T-cell (primary cell): ENCODE measurements at regions of chr17 and their contacts with region 1.

Region 1: GRCh38 chr17:32461853-32462617 is 17.7 kb downstream of the PSMD11 start:
- DNase-seq: peak; percentile 21 to 81 (median 62)
- ATAC-seq: peak; percentile 82 to 88 (median 84)
- H3K4me3 ChIP-seq: no peak overlapping the region
- H3K4me3 Mint-ChIP-seq: no peak overlapping the region
- H3K27ac ChIP-seq: no peak overlapping the region
- H3K27ac Mint-ChIP-seq: peak overlapping the region; percentile 11 to 30
- H3K4me1 ChIP-seq: no peaks in the 10 kb centered on the region
- H3K4me1 Mint-ChIP-seq: peaks cover 31 to 34% (median 34%) of the 10 kb centered on the region in 3 donors
- H3K27me3 ChIP-seq: no peaks in the 10 kb centered on the region
- H3K27me3 Mint-ChIP-seq: no peaks in the 10 kb centered on the region

Region 2: GRCh38 chr17:32396343-32396742 is 65.7 kb before region 1 on chr17:
- CTCF ChIA-PET with region 1: no interaction called
- POLR2A ChIA-PET with region 1: no interaction called
- DNase-seq: no peak
- ATAC-seq: no peak
- H3K4me3 ChIP-seq: no peak overlapping the region
- H3K4me3 Mint-ChIP-seq: no peak overlapping the region
- H3K27ac ChIP-seq: no peak overlapping the region
- H3K27ac Mint-ChIP-seq: peak overlapping the region in 1 of 2 donors; percentile 17
- H3K4me1 ChIP-seq: peaks cover 0 to 3% of the 10 kb centered on the region in 2 experiments
- H3K4me1 Mint-ChIP-seq: peaks cover 4 to 10% (median 9%) of the 10 kb centered on the region in 3 donors
- H3K27me3 ChIP-seq: no peaks in the 10 kb centered on the region
- H3K27me3 Mint-ChIP-seq: no peaks in the 10 kb centered on the region

Region 3: GRCh38 chr17:32444308-32445073 is 17.5 kb before region 1 on chr17 and contains the start of gene PSMD11:
- CTCF ChIA-PET with region 1: interaction called, 6 to 63 read pairs
- POLR2A ChIA-PET with region 1: interaction called, 3 to 7 read pairs
- DNase-seq: peak; percentile 97 to 99 (median 99)
- ATAC-seq: peak; percentile 97 to 98 (median 98)
- H3K4me3 ChIP-seq: peak within 1 kb of the TSS; percentile 82 to 94
- H3K4me3 Mint-ChIP-seq: peak within 1 kb of the TSS; percentile 87 to 93 (median 90)
- H3K27ac ChIP-seq: peak within 1 kb of the TSS; percentile 56
- H3K27ac Mint-ChIP-seq: peak within 1 kb of the TSS; percentile 75 to 81
- H3K4me1 ChIP-seq: peaks cover 12 to 21% of the 10 kb centered on the region in 2 experiments
- H3K4me1 Mint-ChIP-seq: peaks cover 31 to 42% (median 37%) of the 10 kb centered on the region in 3 donors
- H3K27me3 ChIP-seq: no peaks in the 10 kb centered on the region
- H3K27me3 Mint-ChIP-seq: no peaks in the 10 kb centered on the region
- total RNA-seq, gene PSMD11: 56.3 to 72.8 (median 62.9) TPM

Region 4: GRCh38 chr17:32479074-32479617 is 17.1 kb after region 1 on chr17:
- CTCF ChIA-PET with region 1: interaction called, 8 to 11 read pairs
- POLR2A ChIA-PET with region 1: no interaction called
- DNase-seq: no peak
- ATAC-seq: no peak
- H3K4me3 ChIP-seq: no peak overlapping the region
- H3K4me3 Mint-ChIP-seq: no peak overlapping the region
- H3K27ac ChIP-seq: no peak overlapping the region
- H3K27ac Mint-ChIP-seq: peak overlapping the region in 1 of 2 donors; percentile 28
- H3K4me1 ChIP-seq: peaks cover 0 to 7% of the 10 kb centered on the region in 2 experiments
- H3K4me1 Mint-ChIP-seq: peaks cover 11 to 20% (median 18%) of the 10 kb centered on the region in 3 donors
- H3K27me3 ChIP-seq: no peaks in the 10 kb centered on the region
- H3K27me3 Mint-ChIP-seq: no peaks in the 10 kb centered on the region

Region 5: GRCh38 chr17:32609085-32609484 is 147.1 kb after region 1 on chr17:
- CTCF ChIA-PET with region 1: interaction called, 4 to 16 read pairs
- POLR2A ChIA-PET with region 1: interaction called in 1 of 2 experiments, 3 read pairs
- DNase-seq: peak; percentile 54 to 83 (median 73)
- ATAC-seq: peak; percentile 100
- H3K4me3 ChIP-seq: no peak overlapping the region
- H3K4me3 Mint-ChIP-seq: no peak overlapping the region
- H3K27ac ChIP-seq: no peak overlapping the region
- H3K27ac Mint-ChIP-seq: no peak overlapping the region
- H3K4me1 ChIP-seq: no peaks in the 10 kb centered on the region
- H3K4me1 Mint-ChIP-seq: peaks cover 6 to 9% (median 6%) of the 10 kb centered on the region in 3 donors
- H3K27me3 ChIP-seq: no peaks in the 10 kb centered on the region
- H3K27me3 Mint-ChIP-seq: peaks cover 0 to 2% of the 10 kb centered on the region in 2 donors

Region 6: DNA sequence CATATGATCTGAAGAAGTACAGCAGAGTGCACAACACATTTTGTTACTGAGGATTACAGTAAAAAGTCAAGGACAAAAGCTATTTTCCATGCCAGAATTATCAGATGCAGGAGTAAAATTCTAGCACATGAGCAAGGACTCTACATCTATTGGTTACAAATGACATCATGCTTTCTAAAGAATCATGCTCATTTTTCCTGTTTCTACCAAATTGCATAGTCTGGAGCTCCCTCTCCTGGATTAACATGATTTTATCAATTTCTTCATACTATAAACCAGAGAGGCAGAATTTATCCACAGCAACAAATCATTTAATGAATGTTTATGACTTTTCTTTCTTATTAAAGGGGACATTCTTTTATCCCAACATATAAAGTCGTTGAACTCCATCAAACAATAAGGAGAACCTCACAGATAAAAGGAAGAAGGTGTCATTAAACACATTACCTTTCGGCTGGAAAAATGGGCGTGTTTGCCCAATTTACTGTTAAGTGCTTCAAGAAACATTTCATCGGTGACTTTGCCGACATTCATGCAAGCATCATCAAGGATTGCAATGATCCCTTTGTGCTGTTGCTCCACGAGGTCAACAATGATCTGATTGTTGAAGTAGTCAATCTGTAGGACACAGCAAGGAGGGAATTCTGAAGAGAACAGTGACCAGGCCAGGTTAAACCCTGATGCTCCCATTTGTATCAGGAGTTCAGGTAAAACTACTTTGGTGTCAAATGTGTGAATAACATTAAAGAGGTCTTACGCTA is 293.2 kb after region 1 on chr17:
- CTCF ChIA-PET with region 1: interaction called, 14 to 24 read pairs
- POLR2A ChIA-PET with region 1: no interaction called
- DNase-seq: peak in 2 of 35 experiments; percentile 4 to 70
- ATAC-seq: peak; percentile 61 to 84 (median 74)
- H3K4me3 ChIP-seq: no peak overlapping the region
- H3K4me3 Mint-ChIP-seq: no peak overlapping the region
- H3K27ac ChIP-seq: no peak overlapping the region
- H3K27ac Mint-ChIP-seq: no peak overlapping the region
- H3K4me1 ChIP-seq: peaks cover 0 to 2% of the 10 kb centered on the region in 2 experiments
- H3K4me1 Mint-ChIP-seq: peaks cover 12 to 15% (median 13%) of the 10 kb centered on the region in 3 donors
- H3K27me3 ChIP-seq: no peaks in the 10 kb centered on the region
- H3K27me3 Mint-ChIP-seq: no peaks in the 10 kb centered on the region